ENCODE measurements at regions of chr1 and their contacts with region 1.

Region 1: GRCh38 chr1:93078986-93079654 is at the start of gene MTF2:
- H3K4me3 Mint-ChIP-seq: peak within 1 kb of the TSS; percentile 91
- H3K27ac Mint-ChIP-seq: peak within 1 kb of the TSS; percentile 91
- H3K4me1 Mint-ChIP-seq: peaks cover 48% of the 10 kb centered on the region
- H3K27me3 Mint-ChIP-seq: no peaks in the 10 kb centered on the region

Region 2: GRCh38 chr1:93000751-93001175 is 78.4 kb before region 1 on chr1:
- intact Hi-C with region 1: no loop called
- H3K4me3 Mint-ChIP-seq: no peak overlapping the region
- H3K27ac Mint-ChIP-seq: no peak overlapping the region
- H3K4me1 Mint-ChIP-seq: peaks cover 36% of the 10 kb centered on the region
- H3K27me3 Mint-ChIP-seq: peaks cover 4% of the 10 kb centered on the region

Region 3: GRCh38 chr1:93129507-93130099 is 50.5 kb after region 1 on chr1:
- intact Hi-C with region 1: loop called (anchors 5 kb)
- H3K4me3 Mint-ChIP-seq: no peak overlapping the region
- H3K27ac Mint-ChIP-seq: no peak overlapping the region
- H3K4me1 Mint-ChIP-seq: peaks cover 9% of the 10 kb centered on the region
- H3K27me3 Mint-ChIP-seq: no peaks in the 10 kb centered on the region

Region 4: GRCh38 chr1:93179886-93180722 is 101.0 kb after region 1 on chr1 and contains the start of gene TMED5:
- intact Hi-C with region 1: loop called (anchors 1 kb)
- H3K4me3 Mint-ChIP-seq: peak within 1 kb of the TSS; percentile 95
- H3K27ac Mint-ChIP-seq: peak within 1 kb of the TSS; percentile 100
- H3K4me1 Mint-ChIP-seq: peaks cover 47% of the 10 kb centered on the region
- H3K27me3 Mint-ChIP-seq: no peaks in the 10 kb centered on the region

Measured in dendritic cell treated with granulocyte-macrophage colony-stimulating factor and Interleukin-4, amounts not matched to agents 40 ng/mL and 50 ng/mL, for 4 days (primary cell).